Activated naive CD4-positive, alpha-beta T cell treated with anti-CD3 and anti-CD28 coated beads, Interleukin-2, amount 10 ng/mL, durations not matched to agents 7 days and 5 days (primary cell): ENCODE measurements at regions of chr9 and their contacts with region 1.

Region 1: GRCh38 chr9:35829084-35829763 is at the start of gene TMEM8B:
- DNase-seq: peak; percentile 97
- H3K4me3 Mint-ChIP-seq: peak within 1 kb of the TSS; percentile 91
- H3K27ac Mint-ChIP-seq: peak within 1 kb of the TSS; percentile 78
- H3K4me1 Mint-ChIP-seq: peaks cover 34% of the 10 kb centered on the region
- H3K27me3 Mint-ChIP-seq: peaks cover 33% of the 10 kb centered on the region

Region 2: GRCh38 chr9:35798658-35799374 is 30.4 kb before region 1 on chr9:
- CTCF ChIA-PET with region 1: interaction called, 10 read pairs
- DNase-seq: no peak
- H3K4me3 Mint-ChIP-seq: no peak overlapping the region
- H3K27ac Mint-ChIP-seq: no peak overlapping the region
- H3K4me1 Mint-ChIP-seq: peaks cover 13% of the 10 kb centered on the region
- H3K27me3 Mint-ChIP-seq: no peaks in the 10 kb centered on the region

Region 3: GRCh38 chr9:35814841-35815543 is 14.2 kb before region 1 on chr9 and contains the start of gene HINT2:
- CTCF ChIA-PET with region 1: interaction called, 14 read pairs
- DNase-seq: peak; percentile 100
- H3K4me3 Mint-ChIP-seq: peak within 1 kb of the TSS; percentile 83
- H3K27ac Mint-ChIP-seq: peak within 1 kb of the TSS; percentile 97
- H3K4me1 Mint-ChIP-seq: peaks cover 47% of the 10 kb centered on the region
- H3K27me3 Mint-ChIP-seq: peaks cover 31% of the 10 kb centered on the region

Region 4: GRCh38 chr9:35882263-35882848 is 53.1 kb after region 1 on chr9:
- CTCF ChIA-PET with region 1: interaction called, 61 read pairs
- DNase-seq: peak; percentile 85
- H3K4me3 Mint-ChIP-seq: no peak overlapping the region
- H3K27ac Mint-ChIP-seq: no peak overlapping the region
- H3K4me1 Mint-ChIP-seq: no peaks in the 10 kb centered on the region
- H3K27me3 Mint-ChIP-seq: peaks cover 41% of the 10 kb centered on the region